ENCODE measurements at regions of chr12 and their contacts with region 1.

Region 1: DNA sequence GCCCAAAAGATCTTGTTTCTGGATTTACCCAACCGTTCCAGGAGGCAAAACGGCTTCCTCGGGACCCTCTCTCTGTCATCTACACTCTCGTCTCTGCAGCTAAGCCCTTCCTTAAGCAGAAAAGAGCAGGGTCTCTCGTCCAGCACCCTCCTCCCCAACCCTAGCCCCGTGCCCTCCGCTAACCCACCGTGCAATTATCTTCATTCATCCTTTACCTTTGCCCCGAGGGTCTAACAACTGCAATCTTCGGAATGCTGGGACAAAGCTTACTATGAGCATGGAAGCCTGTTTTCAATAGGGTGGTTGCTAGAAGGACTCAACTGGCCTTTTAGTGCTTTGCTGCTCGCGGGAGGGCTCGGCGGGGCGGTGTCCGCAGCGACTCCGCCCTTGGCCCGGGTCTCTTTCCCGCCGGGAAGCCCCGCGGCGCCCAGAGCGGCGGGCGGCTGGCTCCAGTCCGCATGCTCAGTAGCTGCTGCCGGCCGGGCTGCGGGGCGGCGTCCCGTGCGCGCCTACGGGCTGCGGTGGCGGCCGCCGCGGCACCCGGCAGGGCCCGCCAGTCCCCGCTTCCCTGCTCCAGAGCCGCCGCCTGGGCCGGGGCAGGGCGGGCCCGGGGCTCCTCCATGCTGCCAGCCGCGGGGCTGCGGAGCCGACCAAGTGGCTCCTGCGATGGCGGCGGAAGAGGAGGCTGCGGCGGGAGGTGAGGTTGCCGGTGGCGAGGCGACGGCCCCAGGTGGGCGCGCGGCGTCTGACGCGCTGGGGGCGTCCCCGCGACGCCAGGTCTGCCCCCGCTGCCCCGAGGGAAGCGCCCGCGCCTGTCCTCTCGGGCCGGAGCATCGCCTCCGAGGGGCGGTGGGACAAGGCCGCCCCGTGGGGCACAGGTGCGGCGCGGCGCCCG is at the start of gene BMAL2:
- DNase-seq: peak; percentile 54
- H3K4me3 Mint-ChIP-seq: peak within 1 kb of the TSS; percentile 91
- H3K27ac Mint-ChIP-seq: peak within 1 kb of the TSS; percentile 84
- H3K4me1 Mint-ChIP-seq: peaks cover 49% of the 10 kb centered on the region
- H3K27me3 Mint-ChIP-seq: peaks cover 31% of the 10 kb centered on the region
- total RNA-seq, gene BMAL2: 14.9 to 15.2 TPM

Region 2: GRCh38 chr12:26937875-26938700 is 394.6 kb before region 1 on chr12 and contains the starts of genes FGFR1OP2 and INTS13:
- CTCF ChIA-PET with region 1: no interaction called
- POLR2A ChIA-PET with region 1: no interaction called
- intact Hi-C with region 1: loop called (anchors 1 kb)
- DNase-seq: peak; percentile 98
- H3K4me3 Mint-ChIP-seq: peak within 1 kb of the TSS; percentile 94
- H3K27ac Mint-ChIP-seq: peak within 1 kb of the TSS; percentile 98
- H3K4me1 Mint-ChIP-seq: peaks cover 48% of the 10 kb centered on the region
- H3K27me3 Mint-ChIP-seq: no peaks in the 10 kb centered on the region
- total RNA-seq, gene FGFR1OP2: 49.1 to 50.7 TPM
- total RNA-seq, gene INTS13: 54.5 to 54.8 TPM

Region 3: GRCh38 chr12:27207615-27208413 is 124.8 kb before region 1 on chr12:
- CTCF ChIA-PET with region 1: no interaction called
- POLR2A ChIA-PET with region 1: interaction called, 3 read pairs
- intact Hi-C with region 1: loop called (anchors 1 kb)
- DNase-seq: peak; percentile 71
- H3K4me3 Mint-ChIP-seq: no peak overlapping the region
- H3K27ac Mint-ChIP-seq: peak overlapping the region; percentile 51
- H3K4me1 Mint-ChIP-seq: peaks cover 20% of the 10 kb centered on the region
- H3K27me3 Mint-ChIP-seq: no peaks in the 10 kb centered on the region

Region 4: GRCh38 chr12:27305673-27306456 is 26.8 kb before region 1 on chr12:
- CTCF ChIA-PET with region 1: interaction called, 10 read pairs
- POLR2A ChIA-PET with region 1: interaction called, 4 read pairs
- intact Hi-C with region 1: no loop called
- DNase-seq: no peak
- H3K4me3 Mint-ChIP-seq: no peak overlapping the region
- H3K27ac Mint-ChIP-seq: no peak overlapping the region
- H3K4me1 Mint-ChIP-seq: no peaks in the 10 kb centered on the region
- H3K27me3 Mint-ChIP-seq: no peaks in the 10 kb centered on the region

Region 5: GRCh38 chr12:27462151-27462694 is 129.6 kb after region 1 on chr12:
- CTCF ChIA-PET with region 1: no interaction called
- POLR2A ChIA-PET with region 1: no interaction called
- intact Hi-C with region 1: loop called (anchors 2 kb)
- DNase-seq: peak; percentile 34
- H3K4me3 Mint-ChIP-seq: peak overlapping the region; percentile 20
- H3K27ac Mint-ChIP-seq: peak overlapping the region; percentile 8
- H3K4me1 Mint-ChIP-seq: peaks cover 50% of the 10 kb centered on the region
- H3K27me3 Mint-ChIP-seq: peaks cover 20% of the 10 kb centered on the region

Region 6: GRCh38 chr12:27652174-27652763 is 319.6 kb after region 1 on chr12:
- CTCF ChIA-PET with region 1: no interaction called
- POLR2A ChIA-PET with region 1: no interaction called
- intact Hi-C with region 1: loop called (anchors 10 kb)
- DNase-seq: peak; percentile 14
- H3K4me3 Mint-ChIP-seq: no peak overlapping the region
- H3K27ac Mint-ChIP-seq: no peak overlapping the region
- H3K4me1 Mint-ChIP-seq: peaks cover 2% of the 10 kb centered on the region
- H3K27me3 Mint-ChIP-seq: peaks cover 2% of the 10 kb centered on the region

Region 7: GRCh38 chr12:28253161-28253641 is 920.5 kb after region 1 on chr12:
- CTCF ChIA-PET with region 1: no interaction called
- POLR2A ChIA-PET with region 1: no interaction called
- intact Hi-C with region 1: loop called (anchors 5 kb)
- DNase-seq: peak; percentile 66
- H3K4me3 Mint-ChIP-seq: peak overlapping the region; percentile 54
- H3K27ac Mint-ChIP-seq: peak overlapping the region; percentile 86
- H3K4me1 Mint-ChIP-seq: peaks cover 67% of the 10 kb centered on the region
- H3K27me3 Mint-ChIP-seq: no peaks in the 10 kb centered on the region